Left cardiac atrium (tissue), 4 donors: ENCODE measurements at regions of chr2 and their contacts with region 1.

Region 1: DNA sequence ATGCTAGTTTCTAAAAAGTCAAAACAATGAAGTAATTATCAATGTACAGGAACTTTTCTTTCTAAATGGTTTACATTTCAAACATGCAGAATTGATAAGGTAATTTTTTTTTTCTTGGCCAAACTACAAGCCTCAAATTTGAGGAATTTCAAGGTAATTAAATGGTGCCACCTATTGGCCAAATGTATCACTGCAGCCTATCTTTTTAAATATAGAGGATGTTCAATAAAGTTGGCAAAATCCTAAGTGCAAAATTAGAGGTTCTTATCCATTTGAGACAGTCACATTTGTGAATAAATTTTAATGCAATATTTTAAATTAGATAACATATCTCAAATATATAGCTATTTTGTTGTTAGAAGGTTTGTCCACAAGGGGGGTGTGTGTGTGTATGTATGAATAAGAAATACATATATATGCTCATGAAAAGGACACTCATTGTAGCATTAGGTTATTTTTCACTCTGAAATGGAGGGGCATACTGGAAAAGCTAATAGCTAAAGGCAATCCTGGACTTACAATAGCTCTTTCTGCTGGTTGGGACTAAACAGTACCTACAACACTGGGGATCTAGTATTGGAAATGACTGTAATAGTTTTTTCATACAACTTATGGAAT is 26.2 kb downstream of the MMADHC start:
- DNase-seq: no peak
- ATAC-seq: no peak

Region 2: DNA sequence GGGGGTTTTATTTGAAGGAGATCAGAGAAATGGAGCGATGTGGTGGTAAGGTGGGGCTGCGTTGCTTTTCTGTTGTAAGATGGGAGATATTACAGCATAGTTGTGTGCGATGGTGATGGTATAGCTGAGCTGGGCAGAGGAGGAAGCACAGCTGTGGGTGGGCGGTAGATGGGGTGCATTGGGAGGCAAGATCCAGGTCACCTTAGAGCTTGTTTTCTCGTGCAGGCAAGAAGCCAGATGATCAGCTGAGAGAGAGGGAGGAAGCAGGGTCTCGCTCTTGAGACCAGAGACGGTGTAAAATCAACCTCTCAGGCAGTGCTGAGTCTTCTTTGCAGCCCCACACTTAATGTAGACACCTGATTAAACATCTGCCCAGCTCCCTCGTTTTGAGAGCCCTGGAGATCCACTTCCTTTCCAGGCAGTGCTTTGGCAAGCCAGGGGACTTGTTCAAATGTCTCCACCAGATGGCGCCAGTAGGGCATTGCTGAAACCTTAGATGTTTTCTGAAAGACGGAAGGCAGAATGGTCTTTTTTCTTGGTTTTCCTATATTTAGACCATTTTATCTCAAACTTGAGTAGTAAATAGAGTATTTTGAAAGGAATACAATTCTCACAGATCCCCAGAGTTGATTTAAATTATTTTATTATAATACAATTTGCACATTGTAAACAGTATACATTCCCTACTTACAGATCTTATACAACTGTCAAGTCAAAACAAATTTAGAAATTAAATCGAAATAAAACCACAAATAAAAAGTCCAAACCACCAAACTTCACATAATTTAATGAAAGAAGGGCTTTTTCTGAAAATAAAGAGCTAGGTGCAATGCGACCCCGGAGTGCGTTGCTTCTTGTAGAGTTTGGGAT is 544.1 kb before region 1 on chr2:
- intact Hi-C with region 1: loop called (anchors 1 to 5 kb)
- DNase-seq: peak; percentile 81
- ATAC-seq: peak; percentile 73 to 77

Region 3: DNA sequence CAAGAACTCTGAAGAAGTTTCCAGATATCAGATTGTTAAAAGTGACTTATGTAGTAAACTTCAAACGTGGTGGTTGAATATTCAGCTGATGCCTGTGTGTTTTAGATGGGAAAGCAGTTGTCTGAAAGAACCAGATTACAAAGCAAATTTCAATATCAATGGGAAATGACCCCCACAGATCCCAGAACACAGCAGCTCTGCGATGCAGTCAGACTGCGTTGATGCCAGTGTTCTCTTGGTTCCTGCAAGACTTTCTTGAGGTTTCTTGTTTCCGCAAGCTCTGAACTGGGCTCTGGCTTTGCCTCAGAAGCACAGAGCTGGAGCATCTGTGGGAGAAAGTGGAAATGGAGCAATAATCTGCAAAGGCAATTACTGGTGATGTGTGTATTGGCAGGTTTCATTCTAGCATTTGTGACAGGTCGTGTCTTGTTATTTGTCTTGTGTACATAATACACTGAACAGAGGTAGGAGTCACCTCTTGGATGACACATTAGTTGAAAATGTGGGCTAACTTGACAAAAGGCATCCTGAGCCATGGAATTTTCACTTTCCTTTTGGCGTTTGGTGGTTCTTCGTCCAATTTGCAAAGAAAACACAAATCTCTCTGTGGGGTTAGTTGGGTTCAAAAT is 533.7 kb before region 1 on chr2:
- intact Hi-C with region 1: loop called in 1 of 2 experiments (anchors 5 kb)
- DNase-seq: no peak
- ATAC-seq: no peak